SK-N-SH (cell line): ENCODE measurements at regions of chr14 and their contacts with region 1.

Region 1: DNA sequence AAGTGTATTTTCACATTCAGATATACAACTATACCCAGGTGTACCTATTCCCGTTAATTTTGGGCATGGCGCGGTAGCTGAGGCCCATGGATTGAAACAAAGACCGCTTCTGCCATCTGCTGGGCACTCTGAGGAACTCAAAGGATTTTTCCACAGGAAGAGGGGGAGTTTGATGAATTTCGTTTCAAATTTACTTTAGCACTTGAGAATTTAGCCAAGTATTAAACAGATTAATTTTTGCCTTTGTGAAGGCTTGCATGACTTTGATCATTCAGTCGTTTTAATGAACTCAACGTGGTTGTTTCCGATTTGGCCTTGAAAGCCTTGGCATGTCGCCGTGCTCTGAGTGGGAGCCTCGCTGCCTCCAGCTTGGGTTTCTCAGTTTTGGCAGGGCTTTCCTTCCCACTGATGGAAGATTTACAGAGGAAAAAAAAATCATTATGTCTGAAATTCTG is 153.2 kb upstream of the DDHD1 start:
- DNase-seq: peak; percentile 44
- H3K4me3 ChIP-seq: peak overlapping the region; percentile 54 to 60
- H3K27ac ChIP-seq: peak overlapping the region in 1 of 2 experiments; percentile 5; a peak in 1 of 4 replicates
- H3K4me1 ChIP-seq: peaks cover 0 to 3% of the 10 kb centered on the region in 2 experiments; a peak in 1 of 4 replicates
- H3K27me3 ChIP-seq: no peaks in the 10 kb centered on the region
- CTCF ChIP-seq: peak; percentile 90
- EP300 ChIP-seq: no peak
- RAD21 ChIP-seq: peak; percentile 84

Region 2: GRCh38 chr14:52824507-52824906 is 481.8 kb before region 1 on chr14:
- CTCF ChIA-PET with region 1: interaction called, 12 read pairs
- POLR2A ChIA-PET with region 1: no interaction called
- DNase-seq: no peak
- H3K4me3 ChIP-seq: no peak overlapping the region
- H3K27ac ChIP-seq: peak overlapping the region in 1 of 2 experiments; percentile 55; a peak in 2 of 4 replicates
- H3K4me1 ChIP-seq: peaks cover 4 to 13% of the 10 kb centered on the region in 2 experiments
- H3K27me3 ChIP-seq: no peaks in the 10 kb centered on the region
- CTCF ChIP-seq: no peak
- EP300 ChIP-seq: no peak
- RAD21 ChIP-seq: no peak

Region 3: GRCh38 chr14:52961060-52961639 is 345.1 kb before region 1 on chr14:
- CTCF ChIA-PET with region 1: interaction called, 12 read pairs
- POLR2A ChIA-PET with region 1: no interaction called
- DNase-seq: peak; percentile 63
- H3K4me3 ChIP-seq: no peak overlapping the region; a peak in 1 of 4 replicates
- H3K27ac ChIP-seq: no peak overlapping the region
- H3K4me1 ChIP-seq: peaks cover 0 to 3% of the 10 kb centered on the region in 2 experiments; a peak in 1 of 4 replicates
- H3K27me3 ChIP-seq: no peaks in the 10 kb centered on the region
- CTCF ChIP-seq: peak; percentile 71
- EP300 ChIP-seq: no peak
- RAD21 ChIP-seq: peak; percentile 96

Region 4: DNA sequence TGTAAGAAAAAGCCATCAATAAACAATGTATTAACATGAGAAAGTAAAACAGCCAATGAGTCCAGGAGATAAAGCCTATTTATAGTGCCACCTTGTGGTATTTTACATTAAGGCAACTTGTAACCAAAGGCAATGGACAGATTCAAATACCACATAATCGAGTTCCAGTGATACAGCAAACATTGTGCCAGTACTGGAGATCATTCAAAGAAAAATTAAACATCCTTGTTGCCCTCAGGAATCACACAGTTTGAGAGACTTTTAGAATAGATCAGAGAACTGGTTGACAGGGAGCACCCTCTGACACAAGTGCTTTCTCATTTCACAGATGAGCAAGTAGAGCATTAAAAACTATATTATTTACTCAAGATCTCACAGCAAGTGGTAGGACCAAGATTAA is 251.3 kb before region 1 on chr14:
- CTCF ChIA-PET with region 1: interaction called, 20 read pairs
- POLR2A ChIA-PET with region 1: no interaction called
- DNase-seq: peak; percentile 45
- H3K4me3 ChIP-seq: no peak overlapping the region; a peak in 1 of 4 replicates
- H3K27ac ChIP-seq: no peak overlapping the region
- H3K4me1 ChIP-seq: peaks cover 0 to 4% of the 10 kb centered on the region in 2 experiments; a peak in 2 of 4 replicates
- H3K27me3 ChIP-seq: no peaks in the 10 kb centered on the region
- CTCF ChIP-seq: peak; percentile 87
- EP300 ChIP-seq: no peak
- RAD21 ChIP-seq: peak; percentile 82

Region 5: GRCh38 chr14:53295985-53296582 is 10.2 kb before region 1 on chr14:
- CTCF ChIA-PET with region 1: interaction called, 51 read pairs
- POLR2A ChIA-PET with region 1: no interaction called
- DNase-seq: peak; percentile 8
- H3K4me3 ChIP-seq: no peak overlapping the region; a peak in 1 of 4 replicates
- H3K27ac ChIP-seq: no peak overlapping the region
- H3K4me1 ChIP-seq: no peaks in the 10 kb centered on the region
- H3K27me3 ChIP-seq: no peaks in the 10 kb centered on the region
- CTCF ChIP-seq: peak; percentile 80
- EP300 ChIP-seq: no peak
- RAD21 ChIP-seq: peak; percentile 51

Region 6: GRCh38 chr14:53316499-53316898 is 10.2 kb after region 1 on chr14:
- CTCF ChIA-PET with region 1: interaction called, 12 read pairs
- POLR2A ChIA-PET with region 1: no interaction called
- DNase-seq: no peak
- H3K4me3 ChIP-seq: no peak overlapping the region
- H3K27ac ChIP-seq: no peak overlapping the region
- H3K4me1 ChIP-seq: no peaks in the 10 kb centered on the region
- H3K27me3 ChIP-seq: no peaks in the 10 kb centered on the region
- CTCF ChIP-seq: no peak
- EP300 ChIP-seq: no peak
- RAD21 ChIP-seq: no peak

Region 7: DNA sequence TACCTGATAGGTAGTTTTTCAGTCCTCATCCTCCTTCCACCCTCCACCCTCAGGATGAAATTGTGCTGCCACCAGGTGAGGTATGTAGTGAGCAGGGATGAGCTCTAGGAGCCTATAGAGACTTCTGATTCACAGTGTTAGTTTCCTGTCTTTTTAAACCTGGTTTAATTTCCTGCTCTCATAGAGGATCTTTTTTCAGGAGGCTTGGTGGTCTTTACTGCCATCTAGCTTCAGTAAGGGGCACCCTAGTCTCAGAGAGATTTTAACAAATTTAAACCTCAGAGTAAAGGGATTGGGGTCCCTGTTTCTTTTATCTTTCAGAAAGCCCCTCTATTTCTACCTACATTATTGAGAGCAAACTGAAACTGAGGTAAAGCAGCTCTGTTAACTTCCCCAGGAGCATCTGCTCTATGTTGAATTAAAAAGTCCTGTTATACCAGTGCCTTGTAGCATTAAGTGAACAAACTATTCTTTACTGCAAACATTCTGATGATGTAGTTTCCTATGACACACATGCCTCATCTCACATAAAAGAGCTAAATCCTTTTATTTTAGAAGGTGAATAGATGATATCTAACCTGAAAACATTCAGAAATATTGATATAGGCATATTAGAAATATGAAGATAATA is 19.0 kb after region 1 on chr14:
- CTCF ChIA-PET with region 1: interaction called, 20 read pairs
- POLR2A ChIA-PET with region 1: no interaction called
- DNase-seq: peak; percentile 7
- H3K4me3 ChIP-seq: no peak overlapping the region
- H3K27ac ChIP-seq: no peak overlapping the region
- H3K4me1 ChIP-seq: no peaks in the 10 kb centered on the region
- H3K27me3 ChIP-seq: no peaks in the 10 kb centered on the region; the same call in 1 of the 2 replicates
- CTCF ChIP-seq: peak; percentile 29; the same call in 1 of the 2 replicates
- EP300 ChIP-seq: no peak
- RAD21 ChIP-seq: peak; percentile 51

Region 8: GRCh38 chr14:53412803-53413675 is 106.7 kb after region 1 on chr14:
- CTCF ChIA-PET with region 1: no interaction called
- POLR2A ChIA-PET with region 1: no interaction called
- DNase-seq: peak; percentile 5
- H3K4me3 ChIP-seq: no peak overlapping the region
- H3K27ac ChIP-seq: no peak overlapping the region
- H3K4me1 ChIP-seq: no peaks in the 10 kb centered on the region
- H3K27me3 ChIP-seq: no peaks in the 10 kb centered on the region
- CTCF ChIP-seq: peak; percentile 47
- EP300 ChIP-seq: no peak
- RAD21 ChIP-seq: peak; percentile 11; the same call in 1 of the 2 replicates

Region 9: GRCh38 chr14:53501361-53502211 is 195.3 kb after region 1 on chr14:
- CTCF ChIA-PET with region 1: no interaction called
- POLR2A ChIA-PET with region 1: no interaction called
- DNase-seq: no peak
- H3K4me3 ChIP-seq: no peak overlapping the region
- H3K27ac ChIP-seq: no peak overlapping the region
- H3K4me1 ChIP-seq: no peaks in the 10 kb centered on the region
- H3K27me3 ChIP-seq: no peaks in the 10 kb centered on the region
- CTCF ChIP-seq: no peak
- EP300 ChIP-seq: no peak
- RAD21 ChIP-seq: no peak